ENCODE measurements at regions of chr5 and their contacts with region 1.

Region 1: DNA sequence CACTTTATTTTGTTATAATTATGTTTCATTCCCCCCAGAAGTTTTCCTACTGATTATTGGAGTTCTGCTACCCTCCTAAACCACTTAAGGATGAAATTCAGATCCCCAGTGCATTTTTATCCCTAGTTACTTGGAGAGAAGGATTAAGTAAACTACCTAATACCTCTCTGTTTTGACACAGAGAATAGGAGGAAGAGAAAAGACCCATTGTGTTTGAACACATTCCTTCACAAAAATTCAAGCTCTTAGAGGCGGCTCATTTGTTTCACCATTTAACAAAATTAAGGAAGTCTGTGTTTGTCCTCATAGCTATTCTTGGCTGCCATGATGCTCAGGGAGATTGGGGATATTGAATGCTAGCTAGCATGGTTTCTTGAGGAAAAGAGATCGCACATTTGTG is 492.6 kb downstream of the EBF1 start:
- DNase-seq: no peak
- CTCF ChIP-seq: no peak

Region 2: GRCh38 chr5:157378502-157378901 is 1228.6 kb before region 1 on chr5:
- CTCF ChIA-PET with region 1: no interaction called
- POLR2A ChIA-PET with region 1: interaction called, 11 read pairs
- DNase-seq: no peak
- CTCF ChIP-seq: no peak

Region 3: GRCh38 chr5:158514319-158514985 is 92.6 kb before region 1 on chr5:
- CTCF ChIA-PET with region 1: no interaction called
- POLR2A ChIA-PET with region 1: no interaction called
- DNase-seq: no peak
- CTCF ChIP-seq: no peak

Measured in GM10248 (cell line).